CD14-positive monocyte (primary cell): ENCODE measurements at regions of chr6 and their contacts with region 1.

Region 1: DNA sequence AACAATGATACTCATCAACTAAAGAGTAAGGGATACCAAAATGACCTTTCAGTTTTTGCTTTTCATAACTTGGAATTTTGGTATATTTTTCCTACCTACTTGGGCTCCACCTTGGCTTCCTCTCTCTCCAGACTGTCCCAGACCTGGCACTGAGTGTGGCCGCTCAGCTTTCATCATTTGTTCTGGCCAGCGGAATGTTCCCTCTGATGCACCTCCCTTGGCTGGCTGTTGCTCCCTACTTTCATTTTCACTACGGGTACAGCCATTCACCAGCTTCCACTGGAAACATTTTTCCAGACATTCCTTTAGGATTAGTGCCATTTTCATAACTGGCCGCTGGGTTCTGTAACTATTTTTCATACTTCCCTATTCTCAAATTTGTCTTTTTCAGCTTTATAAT is 487.4 kb downstream of the TENT5A start:
- DNase-seq: no peak
- H3K4me3 ChIP-seq: no peak overlapping the region
- H3K4me3 Mint-ChIP-seq: no peak overlapping the region
- H3K27ac ChIP-seq: no peak overlapping the region
- H3K27ac Mint-ChIP-seq: no peak overlapping the region
- H3K4me1 ChIP-seq: no peaks in the 10 kb centered on the region
- H3K4me1 Mint-ChIP-seq: no peaks in the 10 kb centered on the region
- H3K27me3 ChIP-seq: no peaks in the 10 kb centered on the region
- H3K27me3 Mint-ChIP-seq: peaks cover 0 to 3% (median 1%) of the 10 kb centered on the region in 3 donors
- CTCF ChIP-seq: no peak

Region 2: GRCh38 chr6:81309811-81310210 is 44.7 kb after region 1 on chr6:
- intact Hi-C with region 1: no loop called
- DNase-seq: no peak
- H3K4me3 ChIP-seq: no peak overlapping the region
- H3K4me3 Mint-ChIP-seq: no peak overlapping the region
- H3K27ac ChIP-seq: no peak overlapping the region
- H3K27ac Mint-ChIP-seq: no peak overlapping the region
- H3K4me1 ChIP-seq: no peaks in the 10 kb centered on the region
- H3K4me1 Mint-ChIP-seq: no peaks in the 10 kb centered on the region
- H3K27me3 ChIP-seq: no peaks in the 10 kb centered on the region
- H3K27me3 Mint-ChIP-seq: no peaks in the 10 kb centered on the region
- CTCF ChIP-seq: no peak

Region 3: GRCh38 chr6:81708113-81708699 is 443.1 kb after region 1 on chr6:
- intact Hi-C with region 1: loop called in 1 of 2 experiments (anchors 5 kb)
- DNase-seq: no peak
- H3K4me3 ChIP-seq: no peak overlapping the region
- H3K4me3 Mint-ChIP-seq: no peak overlapping the region
- H3K27ac ChIP-seq: no peak overlapping the region
- H3K27ac Mint-ChIP-seq: no peak overlapping the region
- H3K4me1 ChIP-seq: no peaks in the 10 kb centered on the region
- H3K4me1 Mint-ChIP-seq: no peaks in the 10 kb centered on the region
- H3K27me3 ChIP-seq: no peaks in the 10 kb centered on the region
- H3K27me3 Mint-ChIP-seq: no peaks in the 10 kb centered on the region
- CTCF ChIP-seq: no peak